A549 (cell line): ENCODE measurements at regions of chr22 and their contacts with region 1.

Region 1: GRCh38 chr22:46035742-46036557 is 59.0 kb upstream of the WNT7B start:
- DNase-seq: peak; percentile 87 to 98
- ATAC-seq: peak; percentile 90 to 94
- H3K4me3 ChIP-seq: peak overlapping the region; percentile 82
- H3K27ac ChIP-seq: peak overlapping the region; percentile 92 to 95
- H3K4me1 ChIP-seq: peaks cover 15% of the 10 kb centered on the region
- CTCF ChIP-seq: no peak
- EP300 ChIP-seq: no peak
- POLR2A ChIP-seq: peak; percentile 68
- RAD21 ChIP-seq: no peak

Region 2: GRCh38 chr22:46019351-46019750 is 16.6 kb before region 1 on chr22:
- CTCF ChIA-PET with region 1: interaction called, 29 read pairs
- POLR2A ChIA-PET with region 1: interaction called, 63 read pairs
- DNase-seq: peak in 1 of 2 experiments; percentile 38
- ATAC-seq: no peak
- H3K4me3 ChIP-seq: no peak overlapping the region
- H3K27ac ChIP-seq: peak overlapping the region; percentile 69 to 77
- H3K4me1 ChIP-seq: peaks cover 41% of the 10 kb centered on the region
- CTCF ChIP-seq: no peak
- EP300 ChIP-seq: no peak
- POLR2A ChIP-seq: no peak
- RAD21 ChIP-seq: no peak

Region 3: DNA sequence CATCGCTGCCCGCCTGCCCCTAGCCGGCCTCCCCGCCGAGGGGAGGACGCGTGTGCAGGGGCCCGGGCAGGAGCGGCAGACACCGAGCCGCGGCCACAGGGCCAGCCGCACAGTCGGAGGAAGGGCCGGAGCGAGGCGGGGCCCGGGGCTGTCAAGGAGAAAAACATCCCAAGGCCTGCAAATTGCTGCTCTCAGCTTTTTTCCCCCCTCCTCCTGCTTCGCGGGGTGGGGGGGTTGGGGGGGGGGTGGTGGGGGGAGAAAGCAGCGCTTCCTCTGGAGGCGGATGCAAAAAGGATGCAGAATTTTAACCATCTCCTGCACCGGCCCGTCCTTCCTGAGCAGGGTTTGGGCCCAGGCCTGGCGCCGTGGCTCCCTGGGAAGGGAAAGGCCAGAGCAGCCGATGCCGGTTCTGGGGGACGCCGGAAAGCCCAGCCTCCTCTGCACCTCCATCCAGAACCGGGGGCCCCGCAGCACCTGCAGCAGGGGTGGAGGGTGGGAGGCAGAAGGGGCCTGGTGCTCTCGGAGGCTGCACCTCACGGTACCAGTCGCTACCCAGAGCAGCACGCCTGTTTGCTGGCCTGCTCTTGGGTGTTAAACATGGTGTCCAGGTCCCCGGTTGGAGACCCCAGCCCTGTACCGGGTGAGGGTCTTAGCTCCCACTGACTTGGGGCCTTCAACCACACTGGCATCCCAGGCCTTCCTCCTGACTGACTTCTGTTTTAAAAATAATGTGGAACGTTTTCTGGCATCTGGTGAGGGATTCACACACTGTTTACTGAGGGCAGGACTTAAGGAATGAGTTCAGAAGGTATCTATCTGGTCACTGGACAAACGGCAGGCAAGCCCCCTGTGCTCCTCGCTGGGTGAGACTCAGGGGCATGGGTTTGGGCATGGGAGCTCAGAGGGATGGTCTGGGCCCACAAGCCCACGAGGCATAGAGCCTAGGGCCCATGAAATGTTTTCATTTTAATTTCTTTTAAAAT is 18.4 kb after region 1 on chr22:
- CTCF ChIA-PET with region 1: interaction called, 7 read pairs
- POLR2A ChIA-PET with region 1: interaction called, 17 read pairs
- DNase-seq: no peak
- ATAC-seq: peak; percentile 58 to 71; a peak in 5 of 6 replicates
- H3K4me3 ChIP-seq: peak overlapping the region; percentile 61
- H3K27ac ChIP-seq: peak overlapping the region; percentile 99
- H3K4me1 ChIP-seq: peaks cover 43% of the 10 kb centered on the region
- CTCF ChIP-seq: no peak
- EP300 ChIP-seq: no peak
- POLR2A ChIP-seq: no peak
- RAD21 ChIP-seq: no peak

Region 4: DNA sequence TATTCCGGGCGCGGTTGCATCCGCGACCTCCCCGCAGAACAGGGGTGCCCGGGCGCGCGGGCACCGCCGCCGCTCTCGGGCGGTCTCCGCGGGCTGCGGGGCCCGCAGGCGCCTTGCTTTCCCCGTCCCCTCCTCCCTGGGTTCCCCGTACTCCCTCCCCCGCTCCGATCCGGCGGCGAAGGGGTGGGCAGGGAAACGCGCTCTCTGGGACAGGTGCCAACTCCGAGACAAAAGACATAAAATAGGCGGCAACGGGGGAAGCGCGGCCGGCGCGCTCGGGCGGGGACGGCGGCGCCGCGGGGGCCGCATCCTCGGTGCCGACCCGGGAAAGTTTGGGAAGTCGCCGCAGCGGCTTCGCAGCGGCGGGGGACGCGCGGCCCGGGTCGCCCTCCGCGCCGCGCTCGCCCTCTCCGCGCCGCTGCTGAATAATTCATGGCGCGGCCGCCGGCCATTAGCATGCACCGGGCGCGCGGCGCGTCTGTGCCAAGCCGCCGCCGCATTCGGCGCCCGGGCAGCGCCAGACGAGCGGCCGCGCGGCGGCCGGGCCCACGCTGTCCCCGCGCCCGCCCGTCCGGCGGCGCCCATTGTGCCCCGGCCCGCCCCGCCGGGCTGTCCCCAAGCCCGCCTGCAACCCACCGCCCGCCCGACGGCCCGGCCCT is 35.6 kb after region 1 on chr22:
- CTCF ChIA-PET with region 1: interaction called, 5 read pairs
- POLR2A ChIA-PET with region 1: interaction called, 20 read pairs
- DNase-seq: peak in 1 of 2 experiments; percentile 92
- ATAC-seq: peak; percentile 9 to 37; a peak in 4 of 6 replicates
- H3K4me3 ChIP-seq: peak overlapping the region; percentile 73
- H3K27ac ChIP-seq: peak overlapping the region; percentile 99 to 100
- H3K4me1 ChIP-seq: peaks cover 17% of the 10 kb centered on the region
- CTCF ChIP-seq: no peak
- EP300 ChIP-seq: no peak
- POLR2A ChIP-seq: peak; percentile 87
- RAD21 ChIP-seq: no peak